Activated naive CD4-positive, alpha-beta T cell treated with anti-CD3 and anti-CD28 coated beads for 36 hours (primary cell): ENCODE measurements at regions of chr3 and their contacts with region 1.

Region 1: GRCh38 chr3:44976002-44976815 is at the starts of genes EXOSC7 and ZDHHC3:
- DNase-seq: peak; percentile 87
- H3K4me3 Mint-ChIP-seq: peak within 1 kb of the TSS; percentile 96
- H3K27ac Mint-ChIP-seq: peak within 1 kb of the TSS; percentile 84
- H3K4me1 Mint-ChIP-seq: peaks cover 59% of the 10 kb centered on the region
- H3K27me3 Mint-ChIP-seq: no peaks in the 10 kb centered on the region
- total RNA-seq, gene EXOSC7: 61.4 to 64.7 TPM
- total RNA-seq, gene ZDHHC3: 29.5 to 31.0 TPM

Region 2: GRCh38 chr3:44624749-44625480 is 351.3 kb before region 1 on chr3 and contains the start of gene ZNF197:
- CTCF ChIA-PET with region 1: no interaction called
- intact Hi-C with region 1: loop called (anchors 2 kb)
- DNase-seq: peak; percentile 77
- H3K4me3 Mint-ChIP-seq: peak within 1 kb of the TSS; percentile 88
- H3K27ac Mint-ChIP-seq: peak within 1 kb of the TSS; percentile 79
- H3K4me1 Mint-ChIP-seq: peaks cover 28% of the 10 kb centered on the region
- H3K27me3 Mint-ChIP-seq: no peaks in the 10 kb centered on the region
- total RNA-seq, gene ZNF197: 7.7 to 8.4 TPM

Region 3: DNA sequence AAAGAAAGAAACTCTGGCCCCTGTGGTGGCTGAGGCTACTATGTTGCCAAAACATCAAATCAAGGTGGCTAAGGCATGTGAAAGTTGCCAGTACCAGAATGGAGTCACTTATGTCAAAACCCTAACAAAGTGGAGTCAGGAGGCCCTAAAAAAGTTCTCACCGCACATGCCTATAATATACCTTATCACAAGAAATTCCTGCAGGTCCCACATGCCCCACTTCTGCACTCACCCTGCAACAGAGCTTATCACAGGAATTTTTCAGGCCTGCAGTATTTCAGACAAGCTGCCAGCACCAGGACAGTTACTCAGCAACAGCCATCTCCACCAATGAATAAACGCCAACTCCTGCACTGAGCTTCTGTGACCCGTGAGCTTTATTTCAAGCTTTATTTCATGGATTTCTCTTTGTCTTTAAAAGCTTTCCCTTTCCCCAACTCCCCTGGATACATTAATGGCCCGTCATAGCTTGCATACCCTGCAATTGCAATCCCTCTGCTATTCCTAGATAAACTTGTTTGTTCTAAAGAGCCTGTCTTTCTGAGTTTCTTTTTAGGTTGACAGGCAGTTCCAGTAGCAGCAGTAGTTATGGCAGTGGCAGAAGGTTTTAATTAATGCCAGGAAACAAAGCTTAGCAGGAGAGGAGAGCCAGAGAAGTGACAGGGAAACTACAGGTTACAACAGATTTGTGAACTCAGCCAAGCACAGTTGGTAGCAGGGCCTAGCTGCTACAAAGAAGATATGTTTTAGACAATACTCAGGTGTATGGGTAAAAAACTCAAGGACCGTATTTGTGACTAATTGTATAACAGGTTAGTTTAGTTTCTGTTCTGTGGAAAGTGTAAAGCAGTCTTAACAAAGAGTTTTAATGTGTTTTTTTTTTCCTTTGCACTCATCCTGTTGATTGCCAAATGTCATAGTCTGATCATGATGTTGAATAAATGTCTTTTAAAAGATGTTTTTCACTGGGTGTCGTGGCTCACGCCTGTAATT is 130.4 kb before region 1 on chr3:
- CTCF ChIA-PET with region 1: no interaction called
- intact Hi-C with region 1: no loop called
- DNase-seq: no peak
- H3K4me3 Mint-ChIP-seq: no peak overlapping the region
- H3K27ac Mint-ChIP-seq: no peak overlapping the region
- H3K4me1 Mint-ChIP-seq: no peaks in the 10 kb centered on the region
- H3K27me3 Mint-ChIP-seq: no peaks in the 10 kb centered on the region

Region 4: DNA sequence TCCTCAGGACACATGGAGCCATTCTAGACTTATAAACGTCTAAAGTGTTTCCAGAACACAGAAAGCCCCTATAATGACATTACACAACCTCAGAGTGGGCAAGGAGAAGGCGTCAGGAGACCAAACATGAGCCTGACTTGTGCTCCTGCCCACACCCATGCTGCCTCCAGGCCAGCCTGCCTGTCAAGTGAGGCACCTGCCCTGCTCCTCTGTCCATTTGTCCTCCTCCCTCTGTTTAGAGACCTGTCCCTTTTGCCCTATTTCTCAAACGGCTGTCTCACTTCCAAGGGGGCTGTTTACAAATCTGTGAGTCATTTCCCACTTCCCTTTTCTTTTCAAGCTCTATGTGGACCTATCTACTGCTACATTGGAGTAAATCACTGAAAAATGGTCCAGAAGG is 21.2 kb before region 1 on chr3:
- CTCF ChIA-PET with region 1: no interaction called
- intact Hi-C with region 1: no loop called
- DNase-seq: no peak
- H3K4me3 Mint-ChIP-seq: no peak overlapping the region
- H3K27ac Mint-ChIP-seq: no peak overlapping the region
- H3K4me1 Mint-ChIP-seq: no peaks in the 10 kb centered on the region
- H3K27me3 Mint-ChIP-seq: no peaks in the 10 kb centered on the region

Region 5: DNA sequence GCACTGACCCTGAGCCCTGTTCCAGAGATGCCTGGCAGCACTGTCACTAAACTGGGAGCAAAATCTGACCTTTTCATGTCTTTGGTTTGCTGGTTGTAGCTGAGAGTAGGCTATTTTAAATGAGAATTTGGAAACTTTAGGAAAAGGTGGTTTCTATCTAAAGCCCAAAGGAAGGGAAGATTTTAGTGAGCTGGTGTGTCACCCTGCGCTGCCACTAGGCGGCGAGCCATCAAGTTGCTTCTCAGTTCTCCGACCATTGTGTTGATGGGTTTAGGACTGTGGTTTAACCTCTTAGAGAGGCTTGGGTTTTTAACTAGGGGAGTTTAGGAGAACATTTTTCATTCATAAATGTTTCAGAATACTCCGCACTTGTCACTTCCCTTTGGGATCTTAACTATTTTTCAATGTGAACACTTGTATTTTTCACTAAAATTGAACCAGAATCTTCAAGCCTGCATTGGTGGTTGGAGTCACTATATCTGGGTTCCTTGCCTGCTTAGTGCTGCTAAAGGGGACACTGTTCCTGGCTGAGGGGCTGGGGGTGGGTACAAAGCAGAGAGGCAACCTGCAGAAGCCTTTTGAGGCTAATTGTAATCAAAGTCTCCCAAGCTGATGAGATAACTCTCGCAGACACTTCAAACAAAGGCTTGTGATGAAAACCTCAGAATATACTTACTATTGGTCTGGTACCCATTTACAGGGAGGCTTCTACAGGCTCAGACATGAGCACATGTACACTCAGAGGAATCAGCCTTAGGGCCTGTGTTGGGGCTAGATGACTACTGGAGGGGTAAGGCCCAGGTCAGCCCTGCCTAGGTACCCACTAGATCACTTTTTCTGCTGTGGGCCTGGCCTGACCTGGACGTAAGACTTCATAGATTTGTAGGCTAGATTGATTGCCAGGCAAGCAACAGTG is 16.6 kb after region 1 on chr3:
- CTCF ChIA-PET with region 1: interaction called, 4 read pairs
- intact Hi-C with region 1: loop called (anchors 1 kb)
- DNase-seq: peak; percentile 27
- H3K4me3 Mint-ChIP-seq: no peak overlapping the region
- H3K27ac Mint-ChIP-seq: no peak overlapping the region
- H3K4me1 Mint-ChIP-seq: peaks cover 79% of the 10 kb centered on the region
- H3K27me3 Mint-ChIP-seq: no peaks in the 10 kb centered on the region

Region 6: DNA sequence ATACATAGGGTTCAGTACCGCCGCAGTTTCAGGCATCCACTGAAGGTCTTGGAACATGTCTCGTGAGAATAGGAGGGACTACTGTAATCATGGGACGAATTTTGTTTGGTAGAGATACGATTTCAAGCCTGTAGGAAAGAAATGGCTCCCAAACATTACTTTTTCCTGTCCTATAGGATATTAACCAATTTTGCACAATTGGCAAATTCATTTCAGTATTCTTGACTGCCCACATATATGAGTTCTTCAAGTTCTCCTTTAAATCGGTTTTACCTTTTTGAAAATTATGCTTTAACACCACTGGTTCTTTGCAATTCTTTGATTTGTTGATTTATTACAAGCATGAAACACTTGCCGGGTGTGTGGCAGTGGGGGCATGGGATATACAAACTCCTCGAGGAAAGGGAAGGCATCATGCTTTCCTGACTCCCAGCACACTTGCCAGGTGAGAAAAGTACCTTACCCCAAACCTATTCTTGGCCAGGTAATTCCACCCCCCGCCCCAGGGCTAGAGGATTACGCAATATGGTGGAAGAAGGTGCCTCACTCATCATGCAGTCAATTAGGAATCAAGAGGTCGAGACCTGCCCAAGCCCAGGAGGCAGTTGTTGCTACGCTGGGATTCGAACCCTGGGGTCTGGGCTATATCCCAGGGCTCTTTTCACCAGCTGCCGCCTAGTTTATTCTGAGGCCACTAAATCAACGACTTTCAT is 411.6 kb after region 1 on chr3:
- CTCF ChIA-PET with region 1: no interaction called
- intact Hi-C with region 1: loop called (anchors 1 kb)
- DNase-seq: no peak
- H3K4me3 Mint-ChIP-seq: peak overlapping the region; percentile 93
- H3K27ac Mint-ChIP-seq: no peak overlapping the region
- H3K4me1 Mint-ChIP-seq: peaks cover 14% of the 10 kb centered on the region
- H3K27me3 Mint-ChIP-seq: no peaks in the 10 kb centered on the region

Region 7: GRCh38 chr3:45426161-45426560 is 450.0 kb after region 1 on chr3:
- CTCF ChIA-PET with region 1: no interaction called
- intact Hi-C with region 1: no loop called
- DNase-seq: no peak
- H3K4me3 Mint-ChIP-seq: no peak overlapping the region
- H3K27ac Mint-ChIP-seq: no peak overlapping the region
- H3K4me1 Mint-ChIP-seq: no peaks in the 10 kb centered on the region
- H3K27me3 Mint-ChIP-seq: no peaks in the 10 kb centered on the region